ENCODE measurements at regions of chr1 and their contacts with region 1.

Region 1: DNA sequence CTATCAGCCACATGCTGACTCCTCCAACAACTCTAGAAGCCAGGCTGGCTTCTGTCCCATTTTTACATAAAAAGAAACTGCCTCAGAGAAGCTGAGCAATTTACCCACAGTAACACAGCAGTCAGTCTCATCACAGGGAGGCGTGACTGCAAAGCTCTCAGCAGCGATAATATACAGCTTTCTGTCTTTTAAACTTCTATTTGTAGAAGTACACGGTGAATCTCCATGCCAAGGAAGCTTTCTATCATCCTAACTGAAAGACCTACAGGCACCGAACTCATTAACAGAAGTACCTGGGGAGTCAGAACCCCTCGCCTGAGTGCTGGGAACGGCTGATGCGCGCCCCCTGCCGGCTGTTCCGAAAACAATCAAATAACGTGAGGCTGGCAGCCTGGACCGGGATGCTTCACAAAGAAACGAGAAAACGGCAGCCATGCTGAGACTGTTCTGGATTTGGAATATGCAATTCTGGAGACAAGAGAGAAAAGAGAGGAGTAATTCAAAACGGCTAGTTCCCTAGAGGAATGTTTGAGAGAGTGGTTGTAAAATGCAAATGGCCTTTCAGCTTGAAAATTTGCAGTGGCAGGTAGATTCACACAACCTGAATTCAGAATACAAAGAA is 43.5 kb upstream of the RAB4A start:
- DNase-seq: peak; percentile 61
- ATAC-seq: peak; percentile 54
- H3K4me3 ChIP-seq: no peak overlapping the region
- H3K27ac ChIP-seq: no peak overlapping the region
- H3K4me1 ChIP-seq: peaks cover 70 to 78% of the 10 kb centered on the region in 2 experiments
- H3K27me3 ChIP-seq: no peaks in the 10 kb centered on the region
- CTCF ChIP-seq: peak; percentile 78 to 96 (median 88)
- POLR2A ChIP-seq: no peak
- RAD21 ChIP-seq: peak; percentile 96

Region 2: DNA sequence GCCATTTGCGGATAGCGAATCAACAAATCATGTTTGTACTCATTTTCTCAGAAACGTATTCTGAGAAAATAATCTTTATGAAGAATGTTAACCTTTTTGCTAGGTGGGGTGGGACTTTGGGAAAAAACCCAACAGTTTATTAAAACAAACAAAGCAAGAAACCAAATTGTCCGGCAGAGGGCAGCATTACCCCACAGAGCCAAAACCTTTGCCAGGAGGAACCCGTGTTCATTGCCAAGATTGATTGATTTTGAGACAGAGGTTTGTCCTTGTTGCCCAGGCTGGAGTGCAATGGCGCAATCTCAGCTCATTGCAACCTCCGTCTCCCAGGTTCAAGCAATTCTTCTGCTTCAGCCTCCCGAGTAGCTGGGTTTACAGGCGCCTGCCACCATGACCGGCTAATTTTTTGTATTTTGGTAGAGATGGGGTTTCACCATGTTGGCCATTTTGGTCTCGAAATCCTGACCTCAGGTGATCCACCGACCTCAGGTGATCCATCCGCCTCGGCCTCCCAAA is 563.0 kb before region 1 on chr1:
- CTCF ChIA-PET with region 1: interaction called, 18 read pairs
- POLR2A ChIA-PET with region 1: interaction called, 5 read pairs
- RAD21 ChIA-PET with region 1: no interaction called
- intact Hi-C with region 1: loop called (anchors 1 kb)
- DNase-seq: peak; percentile 85
- ATAC-seq: peak; percentile 75
- H3K4me3 ChIP-seq: peak overlapping the region; percentile 37 to 55
- H3K27ac ChIP-seq: peak overlapping the region; percentile 76; the same call in 1 of the 2 replicates
- H3K4me1 ChIP-seq: peaks cover 6 to 17% of the 10 kb centered on the region in 2 experiments; a peak in 3 of 4 replicates
- H3K27me3 ChIP-seq: no peaks in the 10 kb centered on the region
- CTCF ChIP-seq: peak; percentile 70 to 91 (median 79)
- POLR2A ChIP-seq: no peak
- RAD21 ChIP-seq: peak; percentile 98

Region 3: GRCh38 chr1:228691926-228692325 is 535.5 kb before region 1 on chr1:
- CTCF ChIA-PET with region 1: interaction called, 9 read pairs
- POLR2A ChIA-PET with region 1: no interaction called
- RAD21 ChIA-PET with region 1: no interaction called
- intact Hi-C with region 1: loop called (anchors 1 kb)
- DNase-seq: peak; percentile 67
- ATAC-seq: peak; percentile 82
- H3K4me3 ChIP-seq: no peak overlapping the region
- H3K27ac ChIP-seq: no peak overlapping the region
- H3K4me1 ChIP-seq: peaks cover 4 to 10% of the 10 kb centered on the region in 2 experiments; a peak in 3 of 4 replicates
- H3K27me3 ChIP-seq: peaks cover 6% of the 10 kb centered on the region; the same call in 1 of the 2 replicates
- CTCF ChIP-seq: peak; percentile 39 to 80 (median 65)
- POLR2A ChIP-seq: no peak
- RAD21 ChIP-seq: peak; percentile 90

Region 4: DNA sequence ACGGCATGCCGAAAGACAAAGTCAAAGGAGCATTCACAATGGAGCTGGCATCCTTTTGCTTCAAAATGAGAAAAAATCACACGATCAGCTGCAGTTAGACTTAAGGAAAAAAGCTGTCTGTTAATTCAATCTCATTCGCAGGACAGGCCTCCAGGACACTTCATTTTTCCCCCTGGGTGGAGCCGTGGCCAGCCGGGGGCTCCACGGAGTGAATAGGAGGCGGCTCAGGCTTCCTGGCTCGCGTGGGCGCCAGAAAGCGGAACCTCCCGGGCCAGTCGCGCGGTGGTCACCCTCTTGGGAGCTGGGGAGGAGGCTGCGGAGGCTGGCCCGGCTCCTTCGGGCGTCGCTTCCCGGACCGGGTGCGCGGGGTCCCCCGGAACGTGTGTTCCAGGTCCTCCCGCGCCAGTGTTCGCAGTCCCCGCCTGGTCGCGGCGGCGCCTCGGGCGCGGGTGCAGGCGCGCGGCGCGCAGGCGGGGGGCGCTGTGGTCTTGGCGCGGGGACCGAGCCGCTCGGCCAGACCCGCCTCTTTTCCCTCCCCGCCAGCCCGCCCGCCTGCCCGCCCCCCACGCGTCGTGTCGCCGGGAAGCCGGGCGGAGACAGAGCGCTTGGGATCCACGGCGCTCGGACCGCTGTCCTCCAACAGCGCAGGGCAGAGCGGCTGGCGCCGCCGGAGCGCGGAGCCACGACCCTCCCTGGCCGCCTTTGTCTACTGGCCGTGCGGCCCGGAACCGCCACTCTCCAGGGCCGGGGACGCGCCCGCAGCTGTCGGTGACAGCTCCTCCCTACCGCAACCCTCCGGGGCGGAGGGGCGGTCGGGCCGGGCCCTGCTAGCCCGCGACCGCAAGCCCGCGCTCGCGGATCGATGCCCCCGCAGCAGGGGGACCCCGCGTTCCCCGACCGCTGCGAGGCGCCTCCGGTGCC is 492.3 kb before region 1 on chr1 and contains the start of gene RHOU:
- CTCF ChIA-PET with region 1: interaction called, 7 read pairs
- POLR2A ChIA-PET with region 1: no interaction called
- RAD21 ChIA-PET with region 1: no interaction called
- intact Hi-C with region 1: loop called (anchors 1 kb)
- DNase-seq: peak; percentile 12
- ATAC-seq: peak; percentile 90
- H3K4me3 ChIP-seq: peak within 1 kb of the TSS; percentile 53 to 62
- H3K27ac ChIP-seq: peak within 1 kb of the TSS; percentile 45; the same call in 1 of the 2 replicates
- H3K4me1 ChIP-seq: peaks cover 13 to 16% of the 10 kb centered on the region in 2 experiments; a peak in 3 of 4 replicates
- H3K27me3 ChIP-seq: no peaks in the 10 kb centered on the region
- CTCF ChIP-seq: peak in 2 of 3 experiments; percentile 8 to 30; a peak in 2 of 6 replicates
- POLR2A ChIP-seq: no peak
- RAD21 ChIP-seq: peak; percentile 39
- total RNA-seq, gene RHOU: 4.0 TPM

Region 5: DNA sequence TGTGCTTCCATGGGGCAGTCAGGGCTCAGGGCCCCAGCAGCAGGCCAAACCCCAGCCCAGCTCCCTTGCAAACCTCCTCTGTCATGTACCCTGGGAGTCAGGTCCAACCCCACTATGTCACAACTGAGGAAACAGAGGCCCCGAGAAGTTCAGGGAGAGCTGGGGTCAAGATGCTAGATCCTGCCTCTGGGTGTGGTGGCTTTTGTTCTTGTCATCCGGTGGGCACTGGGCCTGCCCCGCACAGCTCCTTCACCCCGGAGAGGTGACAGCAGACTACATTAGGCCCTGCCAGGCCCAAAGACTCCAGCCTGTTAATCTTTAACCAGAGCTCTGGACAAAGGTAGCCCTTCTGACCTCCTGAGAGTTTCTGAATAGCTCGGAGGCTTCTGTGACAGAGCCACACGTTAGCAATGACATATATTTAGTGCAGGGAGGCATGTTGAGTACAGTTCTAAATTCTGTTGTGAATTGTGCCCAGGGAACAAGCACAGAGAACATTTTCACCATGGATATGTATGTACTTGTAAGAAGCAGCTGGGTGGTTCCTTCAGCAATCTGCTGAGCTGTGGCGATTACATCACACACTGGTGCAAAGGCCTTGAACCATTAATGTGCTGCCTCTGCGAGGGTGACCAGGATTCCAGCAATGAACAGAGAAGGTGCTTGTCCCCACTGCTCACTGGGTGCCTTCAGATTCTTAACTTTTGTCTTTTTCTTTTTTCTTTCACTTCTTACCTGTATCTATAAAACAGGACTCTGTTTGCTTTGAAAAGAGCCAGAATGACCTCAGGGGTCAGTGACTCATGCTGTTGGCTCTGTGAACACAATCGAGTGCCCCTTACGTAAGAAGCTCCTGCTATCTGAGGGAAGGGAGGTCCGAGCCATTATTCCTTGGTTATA is 389.3 kb before region 1 on chr1:
- CTCF ChIA-PET with region 1: no interaction called
- POLR2A ChIA-PET with region 1: no interaction called
- RAD21 ChIA-PET with region 1: no interaction called
- intact Hi-C with region 1: loop called (anchors 10 kb)
- DNase-seq: peak; percentile 81
- ATAC-seq: peak; percentile 76
- H3K4me3 ChIP-seq: peak overlapping the region; percentile 1 to 32; a peak in 2 of 4 replicates
- H3K27ac ChIP-seq: peak overlapping the region; percentile 68
- H3K4me1 ChIP-seq: peaks cover 52 to 54% of the 10 kb centered on the region in 2 experiments
- H3K27me3 ChIP-seq: no peaks in the 10 kb centered on the region; the same call in 1 of the 2 replicates
- CTCF ChIP-seq: no peak
- POLR2A ChIP-seq: no peak
- RAD21 ChIP-seq: no peak

Region 6: GRCh38 chr1:229209816-229210215 is 17.6 kb before region 1 on chr1:
- CTCF ChIA-PET with region 1: no interaction called
- POLR2A ChIA-PET with region 1: no interaction called
- RAD21 ChIA-PET with region 1: no interaction called
- intact Hi-C with region 1: no loop called
- DNase-seq: no peak
- ATAC-seq: no peak
- H3K4me3 ChIP-seq: no peak overlapping the region
- H3K27ac ChIP-seq: no peak overlapping the region
- H3K4me1 ChIP-seq: no peaks in the 10 kb centered on the region
- H3K27me3 ChIP-seq: no peaks in the 10 kb centered on the region
- CTCF ChIP-seq: no peak
- POLR2A ChIP-seq: no peak
- RAD21 ChIP-seq: no peak